ENCODE measurements at regions of chr5 and their contacts with region 1.

Region 1: DNA sequence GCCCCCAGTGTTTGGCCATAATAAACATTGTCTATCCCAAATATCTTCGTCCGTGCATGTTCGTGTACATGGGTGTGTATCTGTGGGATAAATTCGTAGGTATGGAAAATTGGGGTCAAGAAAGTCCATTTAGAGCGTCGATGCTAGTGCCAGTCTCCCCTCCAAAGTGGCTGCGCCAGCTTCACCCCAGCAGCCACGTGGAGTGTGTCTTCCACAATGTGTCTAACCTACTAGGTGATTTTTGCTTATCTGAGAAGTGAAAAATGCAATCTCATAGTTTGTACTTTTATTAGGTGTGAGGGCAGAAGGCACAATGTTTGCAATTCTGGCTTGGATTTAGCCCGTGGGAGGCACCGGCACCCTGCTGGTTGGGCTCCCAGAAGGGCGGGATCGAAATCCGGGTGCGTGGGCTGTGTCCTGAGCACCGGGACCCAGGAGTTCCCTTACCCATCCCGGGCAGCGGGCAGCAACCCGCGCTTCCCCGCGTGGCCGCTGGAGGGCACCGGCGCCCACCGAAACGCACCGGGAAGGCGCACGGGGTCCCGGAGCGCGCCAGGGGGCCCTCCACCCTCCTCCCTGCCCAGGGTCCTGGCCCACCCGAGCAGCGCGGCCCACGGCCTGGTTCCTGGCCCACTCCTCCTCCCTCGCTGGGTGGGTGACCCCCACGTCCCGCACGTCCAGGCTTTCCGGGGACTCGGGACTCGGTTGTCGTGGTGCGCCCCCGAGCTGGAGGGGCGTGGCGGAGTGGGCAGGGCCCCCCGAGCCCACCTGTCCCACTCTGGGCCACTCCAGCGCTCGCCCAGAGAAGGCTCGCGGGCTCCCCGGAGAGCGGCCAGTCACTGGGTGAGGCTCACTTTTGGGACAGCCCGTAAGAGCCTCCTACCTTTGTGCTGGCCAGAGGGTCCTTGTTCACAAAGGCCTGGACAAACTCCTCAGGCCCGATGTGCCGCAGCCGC is 55.4 kb upstream of the RNF130 start:
- DNase-seq: no peak
- H3K4me3 ChIP-seq: no peak overlapping the region
- H3K27ac ChIP-seq: no peak overlapping the region
- H3K4me1 ChIP-seq: peaks cover 0 to 21% (median 3%) of the 10 kb centered on the region in 3 donors
- H3K27me3 ChIP-seq: peaks cover 0 to 24% (median 0%) of the 10 kb centered on the region in 4 donors
- CTCF ChIP-seq: peak in 5 of 6 experiments; percentile 50 to 86 (median 63)
- POLR2A ChIP-seq: no peak

Region 2: DNA sequence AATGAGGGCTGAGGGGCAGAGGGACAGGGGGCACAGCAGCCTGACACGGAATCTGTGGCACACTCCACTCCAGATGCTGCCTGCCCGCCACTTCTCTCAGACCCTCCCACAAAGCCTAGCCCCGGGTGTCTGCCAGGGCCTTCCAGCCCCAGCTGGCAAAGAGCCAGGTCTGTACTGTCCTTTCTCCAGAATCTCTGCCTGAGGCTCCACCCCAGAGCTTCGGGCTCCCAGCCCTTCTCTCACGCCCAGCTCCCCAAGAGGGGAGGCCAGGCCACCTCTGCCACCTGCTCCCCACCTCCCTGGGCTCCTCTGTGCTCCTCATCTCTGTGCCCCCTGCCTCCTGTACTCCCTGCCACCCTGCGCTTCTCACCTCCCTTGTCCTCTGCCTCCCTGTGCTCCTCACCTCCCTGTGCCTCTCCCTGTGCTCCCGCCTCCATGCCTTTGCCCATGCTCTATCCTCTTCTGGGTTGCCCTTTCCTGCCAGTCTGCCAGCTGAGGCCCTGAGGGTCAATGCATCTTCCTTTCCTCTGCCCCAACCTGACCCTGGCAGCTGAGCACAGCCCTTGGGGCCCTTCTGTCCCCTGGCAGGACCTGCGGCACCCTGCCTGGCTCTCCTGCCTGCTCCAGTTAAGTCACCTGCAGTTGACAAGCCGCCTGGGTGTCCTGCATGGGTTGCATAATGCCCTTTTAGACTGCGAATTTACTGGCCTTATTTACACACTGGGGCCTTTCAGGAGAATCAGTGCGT is 45.6 kb after region 1 on chr5:
- intact Hi-C with region 1: no loop called
- DNase-seq: no peak
- H3K4me3 ChIP-seq: no peak overlapping the region
- H3K27ac ChIP-seq: peak overlapping the region in 1 of 4 donors; percentile 5
- H3K4me1 ChIP-seq: peaks cover 0 to 8% (median 0%) of the 10 kb centered on the region in 3 donors
- H3K27me3 ChIP-seq: peaks cover 0 to 37% (median 0%) of the 10 kb centered on the region in 4 donors
- CTCF ChIP-seq: no peak
- POLR2A ChIP-seq: no peak

Region 3: DNA sequence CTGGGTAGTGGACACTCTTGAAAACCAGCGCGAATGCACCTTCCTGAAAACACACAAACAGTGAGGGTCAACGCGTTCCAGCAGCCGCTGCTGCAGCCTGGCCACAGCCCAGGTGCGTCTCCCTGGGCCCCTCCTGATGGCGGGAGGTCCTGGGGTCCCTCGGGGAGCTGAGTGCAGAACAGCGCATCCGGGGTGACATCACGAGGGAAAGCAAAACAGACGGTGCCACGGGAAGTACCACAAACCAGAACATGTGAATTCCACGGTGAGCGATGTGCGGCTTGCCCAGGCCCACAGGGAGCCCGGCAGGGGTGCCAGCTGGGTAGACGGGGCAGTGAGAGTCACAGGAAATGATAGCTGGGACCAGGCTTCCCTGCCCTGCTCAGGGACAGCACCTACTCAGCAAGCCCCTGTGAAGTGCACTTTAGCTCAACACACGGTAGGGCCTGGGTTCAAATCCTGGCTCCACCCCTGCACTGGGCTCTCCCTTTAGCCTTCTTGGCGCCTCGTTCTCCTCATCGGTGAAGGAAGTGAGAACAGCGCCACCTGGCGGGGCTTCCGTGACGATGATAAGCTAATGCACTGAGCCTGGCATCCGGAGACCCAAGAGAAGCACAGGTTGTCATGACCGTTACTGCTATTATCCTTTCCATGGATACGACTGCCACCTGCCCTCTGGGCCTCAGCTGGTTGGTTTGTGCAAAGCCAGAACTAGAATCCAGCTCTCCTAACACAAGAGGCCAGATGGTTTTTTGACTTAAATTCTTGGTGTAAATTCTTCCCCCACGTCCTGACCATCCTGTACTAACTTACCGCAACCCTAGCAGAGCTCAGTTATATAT is 201.5 kb after region 1 on chr5:
- intact Hi-C with region 1: loop called (anchors 10 kb)
- DNase-seq: peak; percentile 22
- H3K4me3 ChIP-seq: no peak overlapping the region
- H3K27ac ChIP-seq: no peak overlapping the region
- H3K4me1 ChIP-seq: peaks cover 0 to 47% (median 23%) of the 10 kb centered on the region in 3 donors
- H3K27me3 ChIP-seq: no peaks in the 10 kb centered on the region
- CTCF ChIP-seq: peak; percentile 56 to 78 (median 67)
- POLR2A ChIP-seq: no peak